ENCODE measurements at regions of chr5 and their contacts with region 1.

Region 1: DNA sequence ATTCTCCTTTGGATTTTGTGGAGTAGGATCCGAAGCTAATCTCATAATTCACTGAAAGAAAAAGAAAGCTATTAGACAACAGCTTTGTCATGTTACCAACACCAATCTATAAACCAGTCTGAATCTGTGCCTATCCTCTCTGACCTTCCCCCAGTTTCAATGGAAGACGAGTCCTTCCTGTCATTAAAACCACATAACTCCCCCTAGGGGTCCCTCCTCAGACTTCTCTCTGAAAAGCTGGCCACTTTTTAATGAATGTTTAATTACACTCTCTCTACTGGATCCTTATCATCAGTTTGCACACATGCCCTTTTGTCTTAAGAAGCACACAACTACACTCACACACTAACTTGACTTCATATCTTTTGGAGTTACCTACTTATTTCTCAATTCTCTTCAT is 98.0 kb upstream of the TSLP start:
- DNase-seq: no peak
- H3K4me3 ChIP-seq: no peak overlapping the region
- H3K27ac ChIP-seq: no peak overlapping the region
- H3K4me1 ChIP-seq: no peaks in the 10 kb centered on the region
- H3K27me3 ChIP-seq: no peaks in the 10 kb centered on the region
- CTCF ChIP-seq: no peak
- POLR2A ChIP-seq: no peak

Region 2: GRCh38 chr5:110945874-110946436 is 27.6 kb before region 1 on chr5:
- intact Hi-C with region 1: no loop called
- DNase-seq: no peak
- H3K4me3 ChIP-seq: no peak overlapping the region
- H3K27ac ChIP-seq: no peak overlapping the region
- H3K4me1 ChIP-seq: no peaks in the 10 kb centered on the region
- H3K27me3 ChIP-seq: no peaks in the 10 kb centered on the region
- CTCF ChIP-seq: no peak
- POLR2A ChIP-seq: no peak

Region 3: GRCh38 chr5:112885001-112885400 is 1911.5 kb after region 1 on chr5:
- intact Hi-C with region 1: loop called (anchors 5 kb)
- DNase-seq: peak in 1 of 2 donors; percentile 37
- H3K4me3 ChIP-seq: no peak overlapping the region
- H3K27ac ChIP-seq: peak overlapping the region; percentile 57 to 65
- H3K4me1 ChIP-seq: no peaks in the 10 kb centered on the region
- H3K27me3 ChIP-seq: no peaks in the 10 kb centered on the region
- CTCF ChIP-seq: no peak
- POLR2A ChIP-seq: no peak

Measured in breast epithelium (tissue), 4 donors.